WTC11 (cell line): ENCODE measurements at regions of chr1 and their contacts with region 1.

Region 1: GRCh38 chr1:157963713-157964112 is 29.7 kb upstream of the KIRREL1 start:
- DNase-seq: peak; percentile 79
- ATAC-seq: peak; percentile 90
- H3K4me3 Mint-ChIP-seq: no peak overlapping the region
- H3K27ac Mint-ChIP-seq: no peak overlapping the region
- H3K4me1 Mint-ChIP-seq: peaks cover 14% of the 10 kb centered on the region
- H3K27me3 Mint-ChIP-seq: peaks cover 3% of the 10 kb centered on the region; the same call in 1 of the 2 replicates
- CTCF ChIP-seq: peak; percentile 89

Region 2: DNA sequence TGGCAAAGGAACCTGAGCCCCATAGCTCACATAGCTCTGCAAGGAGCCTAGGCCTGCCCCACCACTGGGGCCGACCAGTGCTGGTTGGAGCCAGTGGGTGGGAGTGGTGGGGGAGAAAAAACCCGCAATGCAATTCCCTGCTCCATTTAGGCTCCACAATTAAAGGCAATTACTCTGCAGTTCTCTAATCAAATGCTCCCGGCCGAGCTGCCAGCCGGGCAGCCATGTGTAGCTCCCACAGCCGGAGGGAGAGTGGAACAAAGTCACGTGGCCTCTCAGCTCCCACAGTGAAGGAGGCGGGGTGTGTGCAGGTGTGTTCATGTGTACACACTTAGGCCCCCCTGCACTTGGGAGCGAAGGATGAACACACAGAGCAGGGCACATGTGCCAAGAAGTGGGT is 111.4 kb after region 1 on chr1:
- CTCF ChIA-PET with region 1: interaction called, 11 read pairs
- POLR2A ChIA-PET with region 1: no interaction called
- DNase-seq: no peak
- ATAC-seq: no peak
- H3K4me3 Mint-ChIP-seq: no peak overlapping the region
- H3K27ac Mint-ChIP-seq: no peak overlapping the region
- H3K4me1 Mint-ChIP-seq: peaks cover 79% of the 10 kb centered on the region
- H3K27me3 Mint-ChIP-seq: no peaks in the 10 kb centered on the region
- CTCF ChIP-seq: no peak

Region 3: DNA sequence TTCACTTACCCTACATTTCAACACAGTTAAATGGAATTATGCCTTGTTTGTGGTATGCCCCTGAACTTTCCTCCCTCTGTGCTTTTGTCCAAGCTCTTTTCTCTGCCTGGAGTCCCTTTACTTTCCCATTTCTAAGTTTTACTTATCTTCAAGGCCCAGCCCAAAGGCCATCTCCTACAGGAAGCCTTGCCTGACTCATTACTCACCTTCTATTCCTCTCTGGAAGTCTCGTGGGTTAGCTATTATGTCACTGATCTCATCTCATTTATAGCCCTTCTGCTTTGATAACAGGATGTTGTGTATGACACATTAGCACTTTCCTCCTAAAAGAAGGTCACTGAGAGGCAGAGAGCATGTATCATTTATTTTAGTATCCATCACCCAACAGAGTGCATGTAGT is 138.2 kb after region 1 on chr1:
- CTCF ChIA-PET with region 1: interaction called, 23 read pairs
- POLR2A ChIA-PET with region 1: no interaction called
- DNase-seq: no peak
- ATAC-seq: no peak
- H3K4me3 Mint-ChIP-seq: no peak overlapping the region
- H3K27ac Mint-ChIP-seq: peak overlapping the region; percentile 96
- H3K4me1 Mint-ChIP-seq: peaks cover 94% of the 10 kb centered on the region
- H3K27me3 Mint-ChIP-seq: no peaks in the 10 kb centered on the region
- CTCF ChIP-seq: no peak